Calu3 (cell line): ENCODE measurements at regions of chr19 and their contacts with region 1.

Region 1: DNA sequence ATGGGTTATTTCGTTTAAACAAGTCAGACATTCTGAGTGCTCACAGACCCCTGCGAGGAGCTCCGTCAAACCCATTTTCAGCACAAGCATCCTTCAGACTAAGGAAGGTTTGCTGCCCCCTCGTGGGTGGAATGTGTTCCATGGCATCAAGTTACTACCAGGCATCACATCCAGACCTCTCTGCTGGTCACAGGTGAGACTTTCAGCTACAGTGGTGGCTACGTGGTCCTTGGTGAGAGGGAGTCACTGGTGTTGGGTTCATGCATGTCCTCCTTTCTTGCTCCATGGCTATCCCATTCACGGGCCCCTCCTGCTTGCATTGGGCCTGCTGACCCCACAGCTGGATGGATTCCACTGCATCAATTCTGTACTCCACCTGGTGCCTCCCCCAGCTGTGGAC is 9.1 kb upstream of the LILRB5 start:
- DNase-seq: peak; percentile 93
- H3K4me3 Mint-ChIP-seq: no peak overlapping the region
- H3K27ac Mint-ChIP-seq: no peak overlapping the region
- H3K4me1 Mint-ChIP-seq: no peaks in the 10 kb centered on the region
- H3K27me3 Mint-ChIP-seq: peaks cover 92% of the 10 kb centered on the region
- CTCF ChIP-seq: peak; percentile 75

Region 2: GRCh38 chr19:53775524-53775923 is 490.6 kb before region 1 on chr19:
- CTCF ChIA-PET with region 1: no interaction called
- intact Hi-C with region 1: loop called (anchors 5 kb)
- DNase-seq: no peak
- H3K4me3 Mint-ChIP-seq: no peak overlapping the region
- H3K27ac Mint-ChIP-seq: no peak overlapping the region
- H3K4me1 Mint-ChIP-seq: peaks cover 8% of the 10 kb centered on the region
- H3K27me3 Mint-ChIP-seq: peaks cover 25% of the 10 kb centered on the region
- CTCF ChIP-seq: no peak

Region 3: GRCh38 chr19:54168174-54168917 is 97.8 kb before region 1 on chr19:
- CTCF ChIA-PET with region 1: interaction called, 11 read pairs
- intact Hi-C with region 1: no loop called
- DNase-seq: peak; percentile 98
- H3K4me3 Mint-ChIP-seq: peak overlapping the region; percentile 11
- H3K27ac Mint-ChIP-seq: peak overlapping the region; percentile 33
- H3K4me1 Mint-ChIP-seq: peaks cover 7% of the 10 kb centered on the region
- H3K27me3 Mint-ChIP-seq: no peaks in the 10 kb centered on the region
- CTCF ChIP-seq: peak; percentile 93